Colonic mucosa (tissue), 4 donors: ENCODE measurements at regions of chrX and their contacts with region 1.

Region 1: DNA sequence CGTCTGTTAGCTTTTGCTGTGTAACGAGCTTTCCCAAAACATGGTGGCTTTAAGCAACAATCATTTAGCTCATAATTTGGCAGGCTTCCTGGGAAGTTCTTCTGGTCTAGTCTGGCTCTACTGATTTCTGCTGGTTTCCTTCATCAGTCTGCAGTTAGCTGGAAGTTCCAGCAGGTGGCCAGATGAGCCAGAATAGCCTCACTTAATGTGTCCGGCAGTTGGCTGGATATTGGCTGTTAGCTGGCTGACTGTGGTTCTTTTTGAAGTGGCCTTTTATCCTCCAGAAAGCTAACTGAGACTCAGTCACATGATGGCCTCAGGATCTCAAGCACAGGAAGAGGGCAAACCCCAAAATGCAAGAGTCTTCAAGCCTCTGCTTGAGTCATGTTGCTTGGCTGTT is 34.9 kb downstream of the FTHL17 start:
- DNase-seq: peak; percentile 30
- H3K4me3 ChIP-seq: no peak overlapping the region
- H3K27ac ChIP-seq: no peak overlapping the region
- H3K4me1 ChIP-seq: no peaks in the 10 kb centered on the region
- H3K27me3 ChIP-seq: no peaks in the 10 kb centered on the region
- CTCF ChIP-seq: peak; percentile 67

Region 2: GRCh38 chrX:31293409-31293808 is 256.5 kb after region 1 on chrX:
- intact Hi-C with region 1: loop called (anchors 10 kb)
- DNase-seq: no peak
- H3K4me3 ChIP-seq: no peak overlapping the region
- H3K27ac ChIP-seq: no peak overlapping the region
- H3K4me1 ChIP-seq: no peaks in the 10 kb centered on the region
- H3K27me3 ChIP-seq: no peaks in the 10 kb centered on the region
- CTCF ChIP-seq: no peak

Region 3: DNA sequence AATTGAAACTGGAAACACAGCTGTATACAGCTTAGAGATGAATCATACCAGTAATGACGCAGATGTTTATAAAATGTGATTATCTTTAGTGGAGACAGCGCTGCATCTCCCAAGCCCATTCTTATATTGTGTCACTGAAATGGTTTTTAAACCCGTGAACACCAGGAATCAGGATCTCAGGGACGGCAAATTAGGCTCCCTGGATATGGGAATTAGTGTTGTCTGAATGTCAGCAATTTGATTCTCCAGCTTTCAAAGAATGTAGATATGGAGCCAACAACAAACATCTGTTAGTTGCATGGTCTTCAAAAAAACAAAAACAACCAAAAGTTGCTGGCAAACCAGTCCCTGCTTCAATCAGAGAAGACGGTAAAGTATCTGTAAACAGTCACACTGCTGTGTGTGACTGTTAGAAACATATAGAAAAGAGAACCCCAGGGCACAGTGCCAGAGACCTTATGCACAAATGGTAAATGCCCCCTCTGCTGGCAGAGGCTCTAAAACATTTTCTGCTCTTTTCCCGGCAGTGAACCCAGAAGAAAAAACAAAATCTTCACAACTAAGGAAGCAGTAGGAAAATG is 386.8 kb after region 1 on chrX:
- intact Hi-C with region 1: loop called (anchors 10 kb)
- DNase-seq: peak; percentile 34
- H3K4me3 ChIP-seq: no peak overlapping the region
- H3K27ac ChIP-seq: no peak overlapping the region
- H3K4me1 ChIP-seq: no peaks in the 10 kb centered on the region
- H3K27me3 ChIP-seq: no peaks in the 10 kb centered on the region
- CTCF ChIP-seq: no peak

Region 4: GRCh38 chrX:31658360-31658759 is 621.5 kb after region 1 on chrX:
- intact Hi-C with region 1: loop called (anchors 5 kb)
- DNase-seq: no peak
- H3K4me3 ChIP-seq: no peak overlapping the region
- H3K27ac ChIP-seq: no peak overlapping the region
- H3K4me1 ChIP-seq: no peaks in the 10 kb centered on the region
- H3K27me3 ChIP-seq: no peaks in the 10 kb centered on the region
- CTCF ChIP-seq: peak; percentile 60